ENCODE measurements at regions of chr5 and their contacts with region 1.

Region 1: DNA sequence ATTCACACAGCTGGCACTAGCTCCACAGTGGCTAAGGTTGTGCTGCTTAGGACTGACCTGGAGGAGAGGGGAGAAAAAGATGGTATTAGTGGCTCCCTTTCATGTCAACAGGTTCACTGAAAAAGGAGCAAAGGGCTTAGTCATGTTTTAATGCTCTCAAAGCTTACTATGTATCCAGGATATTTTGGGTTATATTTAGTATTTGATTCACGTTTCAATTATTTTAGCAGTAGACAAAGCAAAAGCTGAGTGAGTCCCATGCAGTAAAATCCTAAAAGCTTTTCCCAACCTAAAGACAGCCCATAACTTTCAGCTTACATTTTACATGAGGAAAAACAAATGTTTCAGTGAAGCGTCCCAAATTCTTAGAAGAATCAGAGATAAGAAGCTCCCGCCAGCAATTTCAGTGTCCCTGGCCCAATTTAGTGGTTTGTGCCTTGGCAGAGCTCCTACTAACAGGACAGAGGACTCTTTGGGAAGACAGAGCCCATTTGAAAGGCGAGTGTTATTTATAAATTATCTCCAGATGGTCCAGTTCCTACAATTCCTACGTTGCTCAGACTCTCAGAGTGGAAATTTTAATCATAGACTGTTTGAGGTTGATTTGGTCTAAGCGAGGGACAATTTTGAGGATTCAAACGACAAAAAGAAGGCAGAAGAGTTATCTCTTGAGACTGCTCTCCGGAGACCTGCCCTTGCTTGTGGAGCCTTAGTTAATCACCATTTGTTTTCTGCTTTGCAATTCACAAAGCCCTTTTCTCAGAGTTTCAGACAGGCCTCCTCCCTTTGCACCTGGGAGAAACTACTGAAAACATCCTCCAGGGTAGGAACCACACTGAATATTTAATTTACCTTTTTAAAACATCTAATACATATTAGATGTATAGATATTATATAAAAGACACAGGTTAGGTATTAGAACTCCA is 225.0 kb upstream of the ANKRD55 start:
- DNase-seq: peak in 1 of 4 experiments; percentile 16
- ATAC-seq: no peak
- H3K4me3 ChIP-seq: no peak overlapping the region
- H3K27ac ChIP-seq: no peak overlapping the region
- H3K4me1 ChIP-seq: peaks cover 0 to 11% of the 10 kb centered on the region in 2 experiments; a peak in 3 of 5 replicates
- H3K27me3 ChIP-seq: peaks cover 0 to 17% of the 10 kb centered on the region in 2 experiments; a peak in 3 of 5 replicates
- CTCF ChIP-seq: no peak
- EP300 ChIP-seq: no peak
- POLR2A ChIP-seq: no peak
- RAD21 ChIP-seq: no peak

Region 2: GRCh38 chr5:56314529-56314928 is 143.6 kb before region 1 on chr5:
- CTCF ChIA-PET with region 1: no interaction called
- POLR2A ChIA-PET with region 1: no interaction called
- in situ Hi-C with region 1: no loop called
- intact Hi-C with region 1: loop called (anchors 10 kb)
- DNase-seq: peak; percentile 60 to 72 (median 66)
- ATAC-seq: peak; percentile 97
- H3K4me3 ChIP-seq: no peak overlapping the region
- H3K27ac ChIP-seq: no peak overlapping the region
- H3K4me1 ChIP-seq: peaks cover 5 to 28% of the 10 kb centered on the region in 2 experiments
- H3K27me3 ChIP-seq: no peaks in the 10 kb centered on the region; a peak in 2 of 5 replicates
- CTCF ChIP-seq: peak; percentile 65 to 85 (median 70)
- EP300 ChIP-seq: no peak
- POLR2A ChIP-seq: no peak
- RAD21 ChIP-seq: peak in 1 of 2 experiments; percentile 54; a peak in 3 of 4 replicates

Region 3: DNA sequence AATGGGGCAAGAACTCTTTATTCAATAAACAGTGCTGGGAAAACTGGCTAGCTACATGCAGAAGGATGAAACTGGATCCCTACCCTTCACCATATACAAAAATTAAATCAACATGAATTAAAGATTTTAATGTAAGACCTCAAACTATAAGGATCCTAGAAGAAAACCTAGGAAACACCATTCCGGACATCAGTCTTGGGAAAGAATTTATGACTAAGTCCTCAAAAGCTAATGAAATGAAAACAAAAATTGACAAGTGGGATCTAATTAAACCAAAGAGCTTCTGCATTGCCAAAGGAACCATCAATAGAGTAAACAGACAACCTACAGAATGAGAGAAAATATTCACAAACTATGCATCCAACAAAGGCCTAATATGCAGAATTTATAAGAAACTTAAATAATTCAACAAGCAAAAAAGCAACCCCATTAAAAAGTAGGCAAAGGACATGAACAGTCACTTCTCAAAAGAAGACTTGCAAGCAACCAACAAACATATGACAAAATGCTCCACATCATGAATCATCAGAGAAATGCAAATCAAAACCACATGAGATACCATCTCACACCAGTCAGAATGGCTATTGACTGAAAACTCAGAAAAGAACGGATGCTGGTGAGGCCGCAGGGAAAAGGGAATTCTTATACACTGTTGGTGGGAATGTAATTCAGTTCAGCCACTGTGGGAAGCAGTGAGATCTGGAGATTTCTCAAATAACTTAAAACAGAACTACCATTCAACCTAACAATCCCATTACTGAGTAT is 252.9 kb after region 1 on chr5:
- CTCF ChIA-PET with region 1: no interaction called
- POLR2A ChIA-PET with region 1: no interaction called
- in situ Hi-C with region 1: no loop called
- intact Hi-C with region 1: no loop called
- DNase-seq: no peak
- ATAC-seq: no peak
- H3K4me3 ChIP-seq: no peak overlapping the region
- H3K27ac ChIP-seq: no peak overlapping the region
- H3K4me1 ChIP-seq: no peaks in the 10 kb centered on the region
- H3K27me3 ChIP-seq: 0 out of 5 replicates have a peak, but pooled peaks cover 0 to 3% of the 10 kb centered on the region in 2 experiments
- CTCF ChIP-seq: no peak
- EP300 ChIP-seq: no peak
- POLR2A ChIP-seq: no peak
- RAD21 ChIP-seq: no peak

Measured in K562 (cell line).